ENCODE measurements at regions of chr9 and their contacts with region 1.

Region 1: GRCh38 chr9:36400332-36401163 is 479 bp upstream of the RNF38 start:
- DNase-seq: peak; percentile 81 to 85
- ATAC-seq: peak; percentile 89 to 91
- H3K4me3 ChIP-seq: peak overlapping the region; percentile 73 to 91 (median 80)
- H3K27ac ChIP-seq: peak overlapping the region; percentile 90 to 97 (median 96)
- H3K4me1 ChIP-seq: peaks cover 34 to 44% of the 10 kb centered on the region in 2 donors
- H3K27me3 ChIP-seq: no peaks in the 10 kb centered on the region
- CTCF ChIP-seq: peak in 2 of 5 experiments; percentile 22
- POLR2A ChIP-seq: peak; percentile 57 to 82

Region 2: DNA sequence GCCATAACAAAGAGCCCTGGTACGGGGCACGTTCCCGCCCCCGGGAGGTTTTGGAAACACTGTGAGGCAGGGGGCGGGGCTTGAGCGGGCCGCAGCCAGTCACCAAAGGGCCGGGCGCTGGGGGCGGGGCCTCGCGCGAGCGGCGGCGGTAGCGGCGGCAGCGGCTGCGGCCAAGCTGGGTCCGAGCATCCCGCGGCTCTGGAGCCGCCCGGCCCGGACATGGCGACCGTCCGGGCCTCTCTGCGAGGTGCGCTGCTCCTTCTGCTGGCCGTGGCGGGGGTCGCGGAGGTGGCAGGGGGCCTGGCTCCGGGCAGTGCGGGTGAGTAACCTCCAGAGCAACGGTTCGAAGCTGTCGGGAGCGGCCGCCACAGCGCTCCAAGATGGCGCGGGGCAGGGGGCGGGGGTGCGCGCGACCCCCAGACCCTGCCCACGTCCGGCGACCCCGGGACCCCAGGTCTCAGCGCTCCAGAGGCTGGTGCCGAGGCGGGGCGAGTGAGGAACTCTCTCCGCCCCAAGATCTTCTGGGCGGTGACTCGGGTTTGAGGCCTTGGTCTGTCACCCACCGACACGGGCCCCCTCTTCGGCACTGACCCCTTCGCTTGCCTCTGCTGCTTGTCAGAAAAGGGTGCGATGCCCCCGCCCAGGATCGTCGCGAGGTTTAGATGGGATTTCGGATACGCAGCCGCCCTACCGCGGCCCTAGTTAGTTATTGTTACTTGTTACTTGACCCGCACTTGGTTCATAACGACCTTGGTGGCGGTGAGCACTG is 363.6 kb before region 1 on chr9 and contains the start of gene RECK:
- in situ Hi-C with region 1: no loop called
- intact Hi-C with region 1: loop called (anchors 10 kb)
- DNase-seq: peak; percentile 62 to 72
- ATAC-seq: peak; percentile 78 to 87
- H3K4me3 ChIP-seq: peak within 1 kb of the TSS; percentile 68 to 90 (median 76)
- H3K27ac ChIP-seq: peak within 1 kb of the TSS; percentile 67 to 77 (median 68)
- H3K4me1 ChIP-seq: peaks cover 4 to 10% of the 10 kb centered on the region in 2 donors
- H3K27me3 ChIP-seq: peaks cover 0 to 10% (median 7%) of the 10 kb centered on the region in 3 donors
- CTCF ChIP-seq: no peak
- POLR2A ChIP-seq: peak; percentile 77 to 78
- total RNA-seq, gene RECK: 2.9 to 4.1 (median 3.5) TPM

Region 3: DNA sequence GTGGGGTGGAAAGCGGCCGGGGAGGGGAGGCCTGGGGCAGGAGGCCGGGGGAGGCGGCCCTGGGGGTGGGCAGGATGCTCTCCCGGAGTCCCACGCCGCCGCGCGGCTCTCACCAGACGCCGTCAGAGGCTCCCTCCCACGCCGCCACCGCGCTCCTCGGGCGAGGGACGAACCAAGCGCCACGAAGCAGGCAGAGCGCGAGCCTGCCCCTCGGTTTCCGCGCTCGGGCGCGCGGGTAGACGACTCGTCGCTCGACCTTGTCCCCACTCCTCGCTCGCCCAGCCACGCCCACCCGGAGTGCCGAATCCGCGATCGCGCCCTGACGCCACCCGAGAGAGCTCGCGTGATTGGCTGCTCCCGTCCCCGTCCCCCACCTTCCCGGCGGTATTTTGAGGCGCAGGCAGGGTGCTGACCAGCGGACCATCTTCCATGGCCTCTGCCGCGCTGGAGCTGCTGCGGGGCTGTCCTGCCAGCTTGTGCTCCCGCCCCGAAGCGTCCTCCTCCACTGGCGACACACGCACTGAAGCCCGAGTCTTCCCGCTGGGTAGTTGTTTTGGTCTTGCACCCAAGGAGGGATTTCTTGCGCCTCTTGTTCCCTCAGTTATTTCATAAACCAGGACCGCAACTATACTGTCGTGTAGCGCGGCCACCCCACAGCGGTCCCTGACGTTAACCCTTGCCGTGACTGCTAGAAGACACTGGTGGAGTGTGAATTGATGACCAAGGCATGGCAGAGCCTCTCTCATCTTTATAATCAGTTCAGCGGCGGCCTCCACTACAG is 142.2 kb before region 1 on chr9 and contains the start of gene GNE:
- in situ Hi-C with region 1: no loop called
- intact Hi-C with region 1: loop called (anchors 2 kb)
- DNase-seq: peak; percentile 97
- ATAC-seq: peak; percentile 95 to 96
- H3K4me3 ChIP-seq: peak within 1 kb of the TSS; percentile 80 to 97 (median 96)
- H3K27ac ChIP-seq: peak within 1 kb of the TSS; percentile 98 to 99 (median 98)
- H3K4me1 ChIP-seq: peaks cover 4 to 5% of the 10 kb centered on the region in 2 donors
- H3K27me3 ChIP-seq: no peaks in the 10 kb centered on the region
- CTCF ChIP-seq: no peak
- POLR2A ChIP-seq: peak; percentile 91 to 92
- total RNA-seq, gene GNE: 11.0 to 18.5 (median 13.9) TPM

Region 4: GRCh38 chr9:36328798-36329411 is 71.6 kb before region 1 on chr9:
- in situ Hi-C with region 1: no loop called
- intact Hi-C with region 1: no loop called
- DNase-seq: no peak
- ATAC-seq: peak; percentile 57 to 82
- H3K4me3 ChIP-seq: no peak overlapping the region
- H3K27ac ChIP-seq: no peak overlapping the region
- H3K4me1 ChIP-seq: peaks cover 4% of the 10 kb centered on the region in 2 donors
- H3K27me3 ChIP-seq: no peaks in the 10 kb centered on the region
- CTCF ChIP-seq: peak; percentile 64 to 81 (median 71)
- POLR2A ChIP-seq: no peak

Region 5: DNA sequence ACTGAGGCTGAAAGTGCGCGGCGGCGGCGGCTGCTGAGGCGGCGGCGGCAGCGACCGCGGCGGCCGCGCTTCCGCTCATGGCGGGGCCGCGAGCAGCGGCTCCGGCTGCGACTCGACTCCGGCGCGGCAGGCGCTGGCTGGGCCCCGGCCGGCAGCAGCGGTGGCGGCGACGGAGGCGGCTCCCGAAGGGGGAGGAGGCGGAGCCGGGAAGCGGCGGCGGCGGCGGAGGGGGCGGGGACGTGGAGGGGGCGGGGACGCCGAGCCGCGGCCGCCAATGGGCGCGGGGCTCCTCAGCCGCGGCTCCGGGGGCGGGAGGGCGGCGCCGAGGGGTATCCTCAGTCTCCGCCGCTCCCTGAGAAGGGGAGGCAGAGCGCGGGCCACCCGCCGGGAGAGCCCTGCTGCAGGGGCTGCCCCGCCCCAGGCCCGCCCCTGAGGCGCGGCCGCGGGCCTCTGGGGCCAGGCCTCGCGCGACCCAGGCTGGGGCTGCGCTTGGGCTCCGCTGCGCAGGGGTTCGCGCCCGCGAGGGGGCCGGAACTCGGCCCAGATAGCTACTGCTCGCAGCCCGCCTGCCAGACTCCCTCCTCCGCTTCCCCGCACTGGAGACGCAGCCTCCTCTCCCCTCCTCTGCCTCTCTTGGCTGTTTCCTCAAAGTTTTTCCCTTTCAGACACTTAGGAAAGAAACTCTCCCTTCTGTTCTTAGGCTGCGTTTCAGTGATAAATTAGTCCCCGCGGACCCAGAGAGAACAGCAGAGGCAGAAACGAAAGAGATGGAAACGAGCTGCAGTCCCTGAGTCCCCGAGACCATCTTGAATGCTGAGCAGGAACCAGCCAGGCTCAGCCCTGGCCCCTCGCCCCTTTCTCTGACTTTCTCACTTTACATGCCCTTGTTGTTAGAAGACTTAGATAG is 87.2 kb after region 1 on chr9:
- in situ Hi-C with region 1: loop called in 1 of 4 experiments (anchors 10 kb)
- intact Hi-C with region 1: loop called (anchors 2 kb)
- DNase-seq: peak; percentile 76 to 86
- ATAC-seq: peak; percentile 80 to 90
- H3K4me3 ChIP-seq: peak overlapping the region; percentile 59 to 92 (median 74)
- H3K27ac ChIP-seq: peak overlapping the region; percentile 83 to 96 (median 90)
- H3K4me1 ChIP-seq: peaks cover 17 to 24% of the 10 kb centered on the region in 2 donors
- H3K27me3 ChIP-seq: no peaks in the 10 kb centered on the region
- CTCF ChIP-seq: peak in 3 of 5 experiments; percentile 12 to 25 (median 24)
- POLR2A ChIP-seq: peak; percentile 78 to 89

Region 6: GRCh38 chr9:36665921-36666431 is 265.4 kb after region 1 on chr9:
- in situ Hi-C with region 1: no loop called
- intact Hi-C with region 1: no loop called
- DNase-seq: no peak
- ATAC-seq: no peak
- H3K4me3 ChIP-seq: no peak overlapping the region
- H3K27ac ChIP-seq: no peak overlapping the region
- H3K4me1 ChIP-seq: no peaks in the 10 kb centered on the region
- H3K27me3 ChIP-seq: no peaks in the 10 kb centered on the region
- CTCF ChIP-seq: no peak
- POLR2A ChIP-seq: no peak

Measured in gastrocnemius medialis (tissue), 4 donors.